ENCODE measurements at regions of chr2 and their contacts with region 1.

Region 1: GRCh38 chr2:150517951-150518680 is 30.6 kb upstream of the RND3 start:
- DNase-seq: no peak
- H3K4me3 ChIP-seq: no peak overlapping the region
- H3K27ac ChIP-seq: peak overlapping the region; percentile 0 to 4
- H3K4me1 ChIP-seq: no peaks in the 10 kb centered on the region
- H3K27me3 ChIP-seq: no peaks in the 10 kb centered on the region
- CTCF ChIP-seq: no peak
- POLR2A ChIP-seq: no peak

Region 2: DNA sequence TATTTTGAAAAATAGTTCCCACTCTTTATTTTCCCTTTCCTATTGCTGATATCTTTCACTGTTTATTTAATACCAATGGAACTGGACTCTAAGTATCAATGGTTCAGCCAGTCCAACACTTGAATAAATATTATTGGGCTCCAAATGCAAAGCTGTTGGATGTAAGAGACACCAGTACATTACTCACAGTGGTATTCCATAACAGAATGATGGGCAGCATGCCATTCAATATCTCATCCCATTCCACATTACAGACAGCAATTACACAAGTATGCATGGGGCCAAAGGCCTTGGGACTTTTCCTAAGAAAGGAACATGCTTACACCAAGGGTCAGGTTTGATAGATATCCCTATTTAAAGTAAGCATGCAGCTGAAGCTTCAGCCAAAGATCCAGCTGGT is 262.6 kb before region 1 on chr2:
- intact Hi-C with region 1: no loop called
- DNase-seq: no peak
- H3K4me3 ChIP-seq: no peak overlapping the region
- H3K27ac ChIP-seq: no peak overlapping the region
- H3K4me1 ChIP-seq: no peaks in the 10 kb centered on the region
- H3K27me3 ChIP-seq: no peaks in the 10 kb centered on the region
- CTCF ChIP-seq: no peak
- POLR2A ChIP-seq: no peak

Region 3: GRCh38 chr2:150610671-150611279 is 92.7 kb after region 1 on chr2:
- intact Hi-C with region 1: loop called (anchors 10 kb)
- DNase-seq: no peak
- H3K4me3 ChIP-seq: no peak overlapping the region
- H3K27ac ChIP-seq: no peak overlapping the region
- H3K4me1 ChIP-seq: no peaks in the 10 kb centered on the region
- H3K27me3 ChIP-seq: no peaks in the 10 kb centered on the region
- CTCF ChIP-seq: peak; percentile 10 to 55 (median 46)
- POLR2A ChIP-seq: no peak